ENCODE measurements at regions of chr19 and their contacts with region 1.

Region 1: GRCh38 chr19:33176670-33177416 is 17.3 kb upstream of the LRP3 start:
- DNase-seq: peak; percentile 97
- ATAC-seq: peak; percentile 91
- H3K4me3 Mint-ChIP-seq: peak overlapping the region; percentile 86
- H3K27ac Mint-ChIP-seq: peak overlapping the region; percentile 92
- H3K4me1 Mint-ChIP-seq: peaks cover 37% of the 10 kb centered on the region
- H3K27me3 Mint-ChIP-seq: no peaks in the 10 kb centered on the region

Region 2: DNA sequence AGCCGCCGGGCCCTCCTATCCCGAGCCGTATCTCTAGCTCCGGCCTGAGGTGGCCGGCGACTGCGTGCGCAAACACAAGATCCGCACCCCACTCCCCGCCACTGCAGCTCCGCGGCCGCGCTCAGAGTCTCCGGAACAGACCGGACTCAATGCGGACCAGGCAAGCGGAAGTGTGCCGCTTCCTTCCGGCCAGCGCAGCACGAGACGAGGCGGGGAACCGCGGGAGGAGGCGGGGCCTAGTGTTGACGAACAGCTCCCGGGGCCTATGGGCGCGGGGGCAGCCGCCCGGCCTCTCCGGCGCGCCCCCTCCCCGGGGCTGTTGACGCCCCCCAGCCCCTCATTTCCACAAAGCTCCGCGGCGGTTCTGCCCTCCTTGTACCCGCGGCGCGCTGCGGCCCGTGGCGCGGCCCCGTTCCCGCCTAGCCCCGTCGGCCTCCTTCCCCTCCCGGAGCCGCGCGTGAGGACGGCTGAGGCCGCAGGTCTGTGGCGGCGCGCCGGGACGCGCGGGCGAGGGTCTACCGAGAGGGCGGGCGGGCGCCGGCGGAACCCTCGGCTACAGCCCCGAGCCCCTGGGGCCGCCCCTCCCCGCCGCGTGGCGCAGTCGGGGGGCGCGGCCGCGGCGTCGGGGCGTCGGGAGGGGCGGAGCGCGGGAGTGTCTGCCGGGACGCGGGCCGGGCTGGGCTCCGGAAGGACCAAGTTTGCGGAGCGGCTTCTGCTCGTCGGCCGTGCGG is 771.2 kb before region 1 on chr19 and contains the start of gene DPY19L3:
- CTCF ChIA-PET with region 1: no interaction called
- POLR2A ChIA-PET with region 1: no interaction called
- intact Hi-C with region 1: loop called in 1 of 2 experiments (anchors 5 kb)
- DNase-seq: peak; percentile 95
- ATAC-seq: peak; percentile 97
- H3K4me3 Mint-ChIP-seq: peak within 1 kb of the TSS; percentile 84
- H3K27ac Mint-ChIP-seq: peak within 1 kb of the TSS; percentile 91
- H3K4me1 Mint-ChIP-seq: peaks cover 20% of the 10 kb centered on the region
- H3K27me3 Mint-ChIP-seq: no peaks in the 10 kb centered on the region
- total RNA-seq, gene DPY19L3: 14.3 to 14.6 TPM

Region 3: DNA sequence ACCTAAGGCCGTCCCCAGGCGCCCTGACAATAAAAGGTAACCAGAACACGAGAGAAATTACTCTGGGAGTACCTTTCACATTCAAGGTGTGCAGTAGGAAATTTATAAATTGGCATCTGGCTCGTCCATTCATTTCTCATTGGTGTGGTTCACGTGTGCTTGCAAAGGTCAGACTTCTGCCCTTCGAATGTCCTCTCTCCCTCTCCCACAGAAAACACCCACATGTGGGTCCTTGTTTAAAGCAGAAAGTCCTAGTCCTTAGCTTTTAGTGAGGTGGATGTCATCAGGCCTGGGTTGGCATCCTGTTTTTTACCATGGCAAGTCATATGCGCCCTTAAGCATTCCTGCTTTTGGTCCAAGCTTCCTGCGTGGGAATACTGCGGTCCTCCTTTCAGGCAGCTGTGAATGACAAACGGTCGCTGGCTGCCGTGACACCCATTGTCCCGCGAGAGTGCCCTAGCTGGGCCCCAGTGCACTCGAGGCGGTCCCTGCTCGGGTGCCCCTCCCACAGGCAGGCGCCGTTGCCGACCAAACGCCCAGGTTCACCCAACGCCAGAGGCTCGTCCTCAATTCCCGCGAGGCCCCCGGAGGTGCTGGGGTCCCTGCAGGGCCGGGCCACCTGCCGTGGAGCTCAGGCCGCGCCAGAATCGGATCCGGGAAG is 485.4 kb before region 1 on chr19 and contains the start of gene NUDT19:
- CTCF ChIA-PET with region 1: interaction called, 4 read pairs
- POLR2A ChIA-PET with region 1: no interaction called
- intact Hi-C with region 1: loop called (anchors 1 to 5 kb)
- DNase-seq: peak; percentile 91
- ATAC-seq: peak; percentile 83
- H3K4me3 Mint-ChIP-seq: peak within 1 kb of the TSS; percentile 83
- H3K27ac Mint-ChIP-seq: peak within 1 kb of the TSS; percentile 92
- H3K4me1 Mint-ChIP-seq: peaks cover 56% of the 10 kb centered on the region
- H3K27me3 Mint-ChIP-seq: no peaks in the 10 kb centered on the region
- total RNA-seq, gene NUDT19: 14.7 to 17.7 TPM

Region 4: GRCh38 chr19:33080761-33081681 is 95.8 kb before region 1 on chr19 and contains the start of gene GPATCH1:
- CTCF ChIA-PET with region 1: no interaction called
- POLR2A ChIA-PET with region 1: no interaction called
- intact Hi-C with region 1: loop called in 1 of 2 experiments (anchors 1 kb)
- DNase-seq: peak; percentile 93
- ATAC-seq: peak; percentile 94
- H3K4me3 Mint-ChIP-seq: peak within 1 kb of the TSS; percentile 99
- H3K27ac Mint-ChIP-seq: peak within 1 kb of the TSS; percentile 97
- H3K4me1 Mint-ChIP-seq: peaks cover 16% of the 10 kb centered on the region
- H3K27me3 Mint-ChIP-seq: no peaks in the 10 kb centered on the region
- total RNA-seq, gene GPATCH1: 9.5 to 11.1 TPM

Region 5: DNA sequence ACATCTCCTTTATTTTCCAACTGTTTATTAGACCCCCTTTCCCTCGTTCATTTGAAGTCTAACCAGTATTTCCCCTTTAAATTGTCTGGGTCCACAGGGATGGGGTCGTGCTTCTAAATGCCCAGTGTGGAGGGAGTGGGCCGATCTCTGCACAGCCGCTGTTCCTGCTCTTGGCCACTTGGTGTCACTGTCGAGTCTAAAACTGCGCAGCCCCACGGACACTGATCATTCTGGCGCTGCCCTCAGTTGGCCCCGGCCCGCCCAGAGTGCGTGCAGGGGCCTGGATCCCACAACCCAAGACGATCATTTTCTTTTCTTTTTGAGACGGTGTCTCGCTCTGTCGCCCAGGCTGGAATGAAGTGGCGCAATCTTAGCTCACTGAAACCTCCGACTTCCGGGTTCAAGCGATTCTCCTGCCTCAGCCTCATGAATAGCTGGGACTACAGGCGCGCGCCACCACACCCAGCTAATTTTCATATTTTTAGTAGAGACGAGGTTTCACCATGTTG is 32.9 kb before region 1 on chr19:
- CTCF ChIA-PET with region 1: interaction called, 10 read pairs
- POLR2A ChIA-PET with region 1: interaction called, 3 read pairs
- intact Hi-C with region 1: loop called (anchors 1 to 2 kb)
- DNase-seq: peak; percentile 80
- ATAC-seq: peak; percentile 99
- H3K4me3 Mint-ChIP-seq: peak overlapping the region; percentile 1
- H3K27ac Mint-ChIP-seq: no peak overlapping the region
- H3K4me1 Mint-ChIP-seq: peaks cover 4% of the 10 kb centered on the region
- H3K27me3 Mint-ChIP-seq: no peaks in the 10 kb centered on the region

Region 6: DNA sequence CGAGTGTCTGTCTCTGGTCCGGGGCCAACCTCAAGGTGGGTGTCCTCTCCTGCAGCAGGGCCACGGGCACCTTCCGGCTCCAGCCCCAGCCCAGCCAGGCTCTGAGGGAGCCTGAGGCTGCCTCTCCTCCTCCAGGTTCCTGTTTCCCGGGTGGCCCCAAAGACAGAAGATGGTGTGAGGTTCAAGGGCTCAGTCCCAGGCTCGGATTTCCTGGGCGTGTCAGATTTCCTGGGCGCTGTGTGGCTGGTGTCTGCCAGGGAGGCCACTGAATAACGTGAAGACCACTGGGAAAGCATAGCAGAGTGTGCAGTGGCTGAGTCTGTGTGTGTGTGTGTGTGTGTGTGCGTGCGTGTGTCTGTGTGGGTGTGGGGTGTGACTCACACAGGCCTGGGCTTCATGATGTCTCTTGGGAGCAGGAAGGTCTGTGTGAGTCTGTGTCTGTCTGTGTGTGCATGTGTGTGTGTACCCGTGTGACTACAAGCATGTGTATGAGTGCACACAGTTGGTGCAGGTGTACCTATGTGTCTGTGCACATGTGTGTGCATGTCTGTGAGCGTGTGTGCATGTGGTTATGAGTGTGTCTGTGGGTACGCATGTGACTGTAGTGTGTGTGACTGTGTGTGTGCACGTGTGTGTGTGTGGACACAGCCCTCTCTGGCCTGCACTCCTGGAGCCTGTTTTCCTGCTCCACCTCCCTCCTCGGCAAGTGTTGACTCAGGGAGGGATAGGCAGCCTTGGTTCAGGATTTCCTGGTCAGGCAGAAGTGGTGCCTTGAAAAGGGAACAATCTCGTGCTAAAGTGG is 97.2 kb after region 1 on chr19:
- CTCF ChIA-PET with region 1: no interaction called
- POLR2A ChIA-PET with region 1: no interaction called
- intact Hi-C with region 1: no loop called
- DNase-seq: peak; percentile 66
- ATAC-seq: peak; percentile 80
- H3K4me3 Mint-ChIP-seq: no peak overlapping the region
- H3K27ac Mint-ChIP-seq: no peak overlapping the region
- H3K4me1 Mint-ChIP-seq: peaks cover 6% of the 10 kb centered on the region
- H3K27me3 Mint-ChIP-seq: no peaks in the 10 kb centered on the region

Region 7: GRCh38 chr19:33302175-33302973 is 125.5 kb after region 1 on chr19 and contains the start of gene CEBPA:
- CTCF ChIA-PET with region 1: no interaction called
- POLR2A ChIA-PET with region 1: no interaction called
- intact Hi-C with region 1: loop called in 1 of 2 experiments (anchors 1 kb)
- DNase-seq: peak; percentile 78
- ATAC-seq: peak; percentile 95
- H3K4me3 Mint-ChIP-seq: peak within 1 kb of the TSS; percentile 45
- H3K27ac Mint-ChIP-seq: no peak within 1 kb of the TSS
- H3K4me1 Mint-ChIP-seq: no peaks in the 10 kb centered on the region
- H3K27me3 Mint-ChIP-seq: peaks cover 33% of the 10 kb centered on the region
- total RNA-seq, gene CEBPA: 0.11 TPM in 1 of 2 experiments, not detected in the other

Region 8: GRCh38 chr19:34171877-34172660 is 995.2 kb after region 1 on chr19 and contains the start of gene LSM14A:
- CTCF ChIA-PET with region 1: no interaction called
- POLR2A ChIA-PET with region 1: no interaction called
- intact Hi-C with region 1: loop called in 1 of 2 experiments (anchors 2 kb)
- DNase-seq: peak; percentile 95
- ATAC-seq: peak; percentile 70
- H3K4me3 Mint-ChIP-seq: peak within 1 kb of the TSS; percentile 88
- H3K27ac Mint-ChIP-seq: peak within 1 kb of the TSS; percentile 99
- H3K4me1 Mint-ChIP-seq: peaks cover 36% of the 10 kb centered on the region
- H3K27me3 Mint-ChIP-seq: no peaks in the 10 kb centered on the region
- total RNA-seq, gene LSM14A: 89.0 to 151 TPM